ENCODE measurements at regions of chr3 and their contacts with region 1.

Region 1: DNA sequence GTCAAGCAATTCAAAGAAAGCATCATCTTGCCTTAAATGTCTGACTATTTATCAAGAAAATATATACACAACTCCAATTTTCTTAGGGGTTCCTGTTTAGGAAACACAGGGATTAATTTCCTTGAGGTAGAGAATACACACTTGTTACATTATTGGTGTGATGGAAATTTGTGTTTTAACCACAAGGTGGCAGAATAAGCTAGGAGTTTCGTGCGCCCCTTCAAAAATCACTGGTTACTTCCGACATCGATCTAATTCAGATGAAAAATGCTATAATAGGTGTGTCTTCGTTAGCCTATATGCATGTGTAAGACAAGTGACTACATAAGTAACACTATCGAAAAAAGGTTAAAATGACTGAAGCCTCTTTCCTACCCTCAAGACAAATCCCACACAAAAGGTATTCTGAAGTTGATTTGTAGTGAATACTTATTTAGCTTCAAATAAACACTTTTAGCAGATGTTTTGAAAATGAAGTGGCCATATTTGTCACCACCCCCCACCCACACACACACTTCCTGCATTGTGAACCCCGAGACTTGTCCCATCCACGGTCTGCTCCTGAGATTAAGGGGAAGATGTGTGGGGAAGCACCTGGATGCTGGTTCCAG is 246.5 kb downstream of the ROBO1 start:
- DNase-seq: peak; percentile 17 to 38
- H3K4me3 ChIP-seq: no peak overlapping the region; the same call in 1 of the 2 replicates
- H3K27ac ChIP-seq: no peak overlapping the region
- H3K4me1 ChIP-seq: no peaks in the 10 kb centered on the region
- H3K27me3 ChIP-seq: no peaks in the 10 kb centered on the region
- CTCF ChIP-seq: peak; percentile 79

Region 2: DNA sequence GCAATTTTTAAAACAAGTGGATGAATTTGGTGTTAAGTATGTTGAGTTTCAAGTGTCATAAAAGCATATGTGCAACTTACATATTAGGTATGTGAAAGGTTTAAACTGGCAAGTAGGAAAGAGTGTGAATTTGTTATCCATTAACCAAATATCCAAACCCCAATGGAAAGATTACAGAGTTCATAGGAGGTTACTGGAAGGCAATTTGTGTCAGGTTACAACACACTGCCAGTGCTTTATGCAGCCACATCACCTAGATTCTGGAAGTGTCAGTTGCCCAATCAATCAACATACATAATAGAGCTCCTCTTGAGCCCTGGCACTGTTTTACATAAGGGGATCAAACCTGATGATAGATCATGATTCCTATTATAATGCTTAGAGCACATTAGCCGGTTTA is 14.6 kb before region 1 on chr3:
- CTCF ChIA-PET with region 1: no interaction called
- POLR2A ChIA-PET with region 1: no interaction called
- intact Hi-C with region 1: no loop called
- DNase-seq: no peak
- H3K4me3 ChIP-seq: no peak overlapping the region
- H3K27ac ChIP-seq: no peak overlapping the region
- H3K4me1 ChIP-seq: no peaks in the 10 kb centered on the region
- H3K27me3 ChIP-seq: no peaks in the 10 kb centered on the region
- CTCF ChIP-seq: no peak

Region 3: GRCh38 chr3:80676866-80677265 is 1155.5 kb after region 1 on chr3:
- CTCF ChIA-PET with region 1: interaction called, 3 read pairs
- POLR2A ChIA-PET with region 1: interaction called, 13 read pairs
- intact Hi-C with region 1: no loop called
- DNase-seq: no peak
- H3K4me3 ChIP-seq: no peak overlapping the region
- H3K27ac ChIP-seq: no peak overlapping the region
- H3K4me1 ChIP-seq: no peaks in the 10 kb centered on the region
- H3K27me3 ChIP-seq: no peaks in the 10 kb centered on the region
- CTCF ChIP-seq: 0 out of 2 replicates have a peak, but pooled peaks have one; percentile 23

Region 4: DNA sequence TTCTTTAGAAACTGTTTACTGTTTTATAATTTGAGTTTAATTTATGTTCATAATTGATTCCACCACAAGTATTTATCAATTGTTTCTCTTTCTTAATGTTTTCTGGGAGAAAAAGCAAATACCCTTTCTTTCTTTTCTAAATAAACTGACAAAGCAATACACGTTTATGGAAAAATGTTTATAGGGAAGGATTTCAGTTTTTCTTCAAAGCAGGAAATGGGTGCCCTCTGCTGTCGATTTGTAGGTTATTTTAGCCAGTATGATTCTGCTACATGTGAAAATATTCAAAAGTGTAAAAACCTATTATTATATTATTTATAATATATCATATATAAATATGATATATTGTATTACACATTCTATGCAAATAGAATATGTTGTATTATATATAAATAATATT is 1167.5 kb after region 1 on chr3:
- CTCF ChIA-PET with region 1: interaction called, 8 read pairs
- POLR2A ChIA-PET with region 1: no interaction called
- intact Hi-C with region 1: loop called (anchors 1 kb)
- DNase-seq: peak in 1 of 2 experiments; percentile 3
- H3K4me3 ChIP-seq: no peak overlapping the region
- H3K27ac ChIP-seq: no peak overlapping the region
- H3K4me1 ChIP-seq: no peaks in the 10 kb centered on the region
- H3K27me3 ChIP-seq: no peaks in the 10 kb centered on the region
- CTCF ChIP-seq: peak; percentile 66

Region 5: GRCh38 chr3:81242871-81243270 is 1721.5 kb after region 1 on chr3:
- CTCF ChIA-PET with region 1: no interaction called
- POLR2A ChIA-PET with region 1: no interaction called
- intact Hi-C with region 1: loop called (anchors 10 kb)
- DNase-seq: no peak
- H3K4me3 ChIP-seq: no peak overlapping the region
- H3K27ac ChIP-seq: no peak overlapping the region
- H3K4me1 ChIP-seq: no peaks in the 10 kb centered on the region
- H3K27me3 ChIP-seq: no peaks in the 10 kb centered on the region
- CTCF ChIP-seq: peak; percentile 60

Measured in PC-9 (cell line).